ENCODE measurements at regions of chr5 and their contacts with region 1.

Region 1: GRCh38 chr5:128965011-128965637 is at the start of gene SLC27A6:
- DNase-seq: peak; percentile 28 to 67 (median 54)
- ATAC-seq: peak; percentile 91 to 98 (median 97)
- H3K4me3 ChIP-seq: peak within 1 kb of the TSS; percentile 25 to 65 (median 58)
- H3K27ac ChIP-seq: peak within 1 kb of the TSS; percentile 31 to 86 (median 74)
- H3K4me1 ChIP-seq: peaks cover 0 to 8% (median 0%) of the 10 kb centered on the region in 12 donors
- H3K27me3 ChIP-seq: peaks cover 0 to 16% (median 0%) of the 10 kb centered on the region in 9 donors
- CTCF ChIP-seq: no peak
- POLR2A ChIP-seq: no peak
- total RNA-seq, gene SLC27A6: 9.0 to 95.1 (median 31.5) TPM

Region 2: DNA sequence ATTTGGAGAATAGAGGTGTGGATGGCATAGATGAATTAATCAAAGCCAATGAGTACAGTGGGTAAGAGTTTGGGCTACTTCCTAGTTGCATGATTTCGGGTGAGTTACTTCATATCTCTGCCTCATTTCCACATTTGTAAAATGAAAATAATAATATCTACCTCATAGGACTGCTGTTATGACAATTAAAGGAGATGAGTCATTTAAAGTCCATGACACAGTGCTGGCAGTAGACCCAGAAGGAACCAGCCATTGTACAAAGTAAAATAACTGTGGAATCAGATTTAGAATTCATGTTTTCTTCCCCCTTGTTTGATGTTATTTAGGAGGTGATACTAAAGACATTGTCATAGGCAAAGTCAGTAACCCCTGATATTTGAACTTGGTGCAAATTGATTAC is 139.3 kb before region 1 on chr5:
- intact Hi-C with region 1: no loop called
- DNase-seq: no peak
- ATAC-seq: peak in 1 of 4 donors; percentile 31
- H3K4me3 ChIP-seq: no peak overlapping the region
- H3K27ac ChIP-seq: no peak overlapping the region
- H3K4me1 ChIP-seq: no peaks in the 10 kb centered on the region
- H3K27me3 ChIP-seq: no peaks in the 10 kb centered on the region
- CTCF ChIP-seq: no peak
- POLR2A ChIP-seq: no peak

Region 3: DNA sequence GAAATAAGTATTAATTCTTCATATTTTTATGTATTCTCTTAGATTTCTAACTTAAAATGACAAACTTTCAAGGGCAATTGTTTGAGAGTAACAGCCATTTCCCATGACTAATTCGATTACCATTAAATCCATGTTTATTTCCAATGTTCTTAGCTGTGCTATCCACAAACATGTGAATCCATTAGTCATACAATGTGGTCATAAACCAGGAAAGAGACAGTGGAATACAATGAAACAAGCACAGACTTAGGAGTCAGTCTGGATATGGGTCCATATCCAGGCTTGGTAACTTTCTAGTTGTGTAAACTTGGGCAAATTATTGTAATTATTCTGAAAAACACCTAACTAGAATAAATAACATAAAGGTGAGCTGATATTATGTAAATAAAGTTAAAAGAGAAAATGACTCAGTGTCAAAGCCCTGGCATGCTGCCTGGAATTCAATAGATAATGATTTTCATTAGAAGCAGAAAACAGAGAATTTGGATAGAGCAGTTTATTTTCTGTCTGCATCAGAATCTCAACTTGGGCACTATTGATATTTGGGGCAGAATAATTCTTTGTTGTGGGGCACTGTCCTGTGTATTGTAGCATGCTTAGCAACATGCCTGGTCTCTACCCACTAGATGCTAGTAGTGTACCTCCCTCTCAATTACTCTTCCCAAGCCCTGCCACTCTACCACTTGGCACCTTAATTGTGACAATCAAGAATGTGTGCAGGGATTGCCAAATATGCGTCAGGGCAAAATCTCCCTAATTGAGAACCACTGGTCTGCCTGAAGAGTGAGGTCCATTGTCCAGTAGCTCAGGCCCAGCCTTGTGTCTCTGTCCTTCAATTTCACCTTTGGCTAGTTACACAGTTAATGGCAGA is 44.5 kb before region 1 on chr5:
- intact Hi-C with region 1: loop called in 2 of 10 experiments (anchors 5 kb)
- DNase-seq: peak in 4 of 5 donors; percentile 33 to 62 (median 43)
- ATAC-seq: peak; percentile 88 to 95 (median 94)
- H3K4me3 ChIP-seq: no peak overlapping the region
- H3K27ac ChIP-seq: peak overlapping the region in 10 of 12 donors; percentile 2 to 74 (median 65)
- H3K4me1 ChIP-seq: peaks cover 0 to 11% (median 0%) of the 10 kb centered on the region in 12 donors
- H3K27me3 ChIP-seq: no peaks in the 10 kb centered on the region
- CTCF ChIP-seq: no peak
- POLR2A ChIP-seq: no peak

Region 4: GRCh38 chr5:128927644-128928043 is 37.5 kb before region 1 on chr5:
- intact Hi-C with region 1: loop called in 3 of 10 experiments (anchors 2 to 5 kb)
- DNase-seq: no peak
- ATAC-seq: no peak
- H3K4me3 ChIP-seq: no peak overlapping the region
- H3K27ac ChIP-seq: no peak overlapping the region
- H3K4me1 ChIP-seq: peaks cover 0 to 5% (median 0%) of the 10 kb centered on the region in 12 donors
- H3K27me3 ChIP-seq: no peaks in the 10 kb centered on the region
- CTCF ChIP-seq: no peak
- POLR2A ChIP-seq: no peak